Psoas muscle (tissue), 8 donors: ENCODE measurements at regions of chr11 and their contacts with region 1.

Region 1: DNA sequence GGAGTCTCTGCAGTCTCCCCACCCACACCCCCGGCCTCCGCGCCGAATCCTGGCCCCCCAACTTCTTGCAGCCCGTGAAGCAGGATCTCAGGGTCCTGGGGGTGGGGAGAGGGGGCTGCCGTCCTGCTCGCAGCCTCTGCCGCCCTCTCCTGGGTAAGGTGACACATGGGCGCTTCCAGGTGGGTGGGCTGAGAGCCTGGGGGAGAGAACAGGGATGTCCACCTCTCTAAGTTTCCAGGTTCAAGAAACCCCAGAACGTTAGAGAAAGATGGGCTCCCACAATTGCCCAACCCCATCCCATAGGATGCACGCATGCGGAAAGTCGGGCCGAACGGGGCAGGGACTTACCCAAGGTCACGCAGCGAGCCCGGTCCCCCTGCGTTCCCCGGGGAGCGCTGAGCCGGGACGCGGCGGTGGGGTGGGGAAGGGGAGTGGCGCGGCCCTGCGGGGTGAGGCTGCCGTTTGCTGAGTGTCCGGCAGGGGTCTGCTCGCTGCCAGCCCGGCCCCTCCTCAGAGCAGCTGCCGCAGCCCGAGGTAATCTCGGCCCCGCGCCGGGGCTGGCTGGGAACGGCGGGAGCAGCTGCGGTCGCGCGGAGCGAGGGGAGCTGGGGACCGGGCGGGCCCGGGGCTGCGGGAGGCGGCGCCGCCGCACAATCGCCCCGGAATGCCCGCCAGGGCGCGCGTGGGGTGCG is 705 bp upstream of the CAPN1 start:
- DNase-seq: peak; percentile 69 to 86
- ATAC-seq: peak; percentile 69 to 74 (median 72)
- H3K4me3 ChIP-seq: peak overlapping the region; percentile 88
- H3K27ac ChIP-seq: peak overlapping the region; percentile 91
- H3K4me1 ChIP-seq: no peaks in the 10 kb centered on the region
- H3K27me3 ChIP-seq: no peaks in the 10 kb centered on the region
- CTCF ChIP-seq: peak; percentile 45

Region 2: DNA sequence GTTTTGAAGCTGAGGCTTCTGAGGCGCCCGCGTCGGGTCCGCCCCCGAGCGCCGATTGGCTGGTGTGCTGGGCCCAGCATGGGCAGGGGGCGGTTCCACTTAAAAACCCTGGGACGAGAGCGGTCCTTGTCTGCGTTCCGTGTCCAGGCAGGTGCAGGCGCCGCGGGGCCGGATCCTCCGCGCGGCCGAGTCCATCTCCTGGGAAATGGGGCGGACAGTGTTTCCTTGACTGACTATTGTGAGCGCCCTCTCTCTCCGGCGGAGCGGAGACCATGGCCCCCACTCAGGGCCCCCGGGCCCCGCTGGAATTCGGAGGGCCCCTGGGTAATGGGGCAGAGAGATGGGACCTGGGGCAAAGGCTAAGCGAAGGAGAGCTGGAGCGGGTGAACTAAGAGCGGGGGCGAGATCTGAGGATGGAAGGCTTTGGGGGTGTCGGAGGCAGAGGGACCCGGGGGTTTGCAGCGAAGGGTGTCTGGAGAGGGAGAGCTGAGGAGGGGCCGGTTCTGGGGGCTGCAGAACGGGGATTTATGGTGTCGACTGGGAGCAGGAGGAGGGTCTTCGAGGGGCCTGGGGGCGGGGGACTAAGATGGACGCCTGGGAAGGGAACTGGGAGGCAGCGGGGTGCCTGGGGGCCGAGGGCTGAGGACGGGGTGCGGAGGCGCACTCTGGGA is 69.1 kb before region 1 on chr11 and contains the start of gene TM7SF2:
- intact Hi-C with region 1: loop called in 1 of 2 experiments (anchors 2 kb)
- DNase-seq: peak; percentile 96 to 97
- ATAC-seq: peak; percentile 85 to 92 (median 90)
- H3K4me3 ChIP-seq: peak within 1 kb of the TSS; percentile 73
- H3K27ac ChIP-seq: peak within 1 kb of the TSS; percentile 68
- H3K4me1 ChIP-seq: peaks cover 31% of the 10 kb centered on the region
- H3K27me3 ChIP-seq: no peaks in the 10 kb centered on the region
- CTCF ChIP-seq: no peak
- total RNA-seq, gene TM7SF2: 5.1 to 13.5 (median 9.5) TPM

Region 3: GRCh38 chr11:65117216-65118096 is 63.6 kb before region 1 on chr11 and contains the start of gene ZNHIT2:
- intact Hi-C with region 1: loop called in 1 of 2 experiments (anchors 5 kb)
- DNase-seq: peak; percentile 99 to 100
- ATAC-seq: peak; percentile 86 to 88 (median 87)
- H3K4me3 ChIP-seq: peak within 1 kb of the TSS; percentile 79
- H3K27ac ChIP-seq: peak within 1 kb of the TSS; percentile 81
- H3K4me1 ChIP-seq: peaks cover 28% of the 10 kb centered on the region
- H3K27me3 ChIP-seq: no peaks in the 10 kb centered on the region
- CTCF ChIP-seq: peak; percentile 93
- total RNA-seq, gene ZNHIT2: 8.6 to 16.1 (median 10.2) TPM

Region 4: DNA sequence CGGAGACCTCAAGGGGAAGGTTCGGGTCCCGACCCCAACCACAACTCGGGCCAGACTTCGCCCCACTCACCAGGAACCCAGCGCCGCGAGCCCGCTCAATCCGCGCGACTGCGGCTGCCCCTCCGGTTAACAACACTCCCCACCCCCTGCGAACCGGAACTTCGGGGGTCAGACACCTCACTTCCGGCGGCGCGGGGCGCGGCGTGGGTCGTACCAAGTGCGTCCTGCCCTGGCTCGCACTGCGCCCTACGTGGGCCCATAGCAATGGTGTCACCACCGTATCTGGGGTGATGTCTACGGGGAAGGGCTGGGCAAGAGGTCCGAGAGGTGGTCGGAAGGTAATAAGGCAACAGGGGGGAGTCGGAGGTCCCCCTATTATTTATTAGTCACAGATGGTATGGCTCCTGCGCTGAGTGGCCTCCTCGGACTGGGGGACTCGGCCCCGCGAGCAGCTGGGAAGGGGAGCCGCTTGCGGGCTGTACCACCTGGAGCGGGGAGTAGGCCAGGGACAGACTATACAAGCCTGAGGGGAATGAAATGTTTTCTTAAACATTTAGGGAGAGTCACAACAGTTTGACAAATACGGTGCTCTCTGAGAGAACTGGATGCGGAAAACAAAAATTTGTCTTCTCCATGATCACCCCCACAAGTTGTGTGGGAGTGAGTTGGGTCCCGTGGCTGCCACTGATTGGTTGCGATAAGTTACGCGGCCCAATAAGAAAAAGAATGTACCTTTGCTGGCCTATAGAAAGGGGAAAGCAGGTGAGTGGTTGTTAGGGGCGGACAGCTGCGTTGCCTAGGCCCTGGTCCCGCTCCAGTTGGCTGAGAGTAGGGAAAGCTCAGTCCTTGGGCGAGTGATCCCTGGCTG is 46.4 kb before region 1 on chr11 and contains the start of gene SYVN1:
- intact Hi-C with region 1: loop called in 1 of 2 experiments (anchors 2 kb)
- DNase-seq: peak; percentile 91 to 97
- ATAC-seq: peak; percentile 91
- H3K4me3 ChIP-seq: peak within 1 kb of the TSS; percentile 98
- H3K27ac ChIP-seq: peak within 1 kb of the TSS; percentile 96
- H3K4me1 ChIP-seq: peaks cover 30% of the 10 kb centered on the region
- H3K27me3 ChIP-seq: no peaks in the 10 kb centered on the region
- CTCF ChIP-seq: no peak
- total RNA-seq, gene SYVN1: 26.5 to 56.1 (median 31.7) TPM

Region 5: GRCh38 chr11:65386307-65387081 is 205.5 kb after region 1 on chr11 and contains the start of gene FRMD8:
- intact Hi-C with region 1: no loop called
- DNase-seq: peak; percentile 95 to 97
- ATAC-seq: peak; percentile 65 to 73 (median 68)
- H3K4me3 ChIP-seq: peak within 1 kb of the TSS; percentile 76
- H3K27ac ChIP-seq: peak within 1 kb of the TSS; percentile 89
- H3K4me1 ChIP-seq: peaks cover 70% of the 10 kb centered on the region
- H3K27me3 ChIP-seq: no peaks in the 10 kb centered on the region
- CTCF ChIP-seq: no peak
- total RNA-seq, gene FRMD8: 7.4 to 27.7 (median 13.9) TPM